GM18951 (cell line): ENCODE measurements at regions of chr1 and their contacts with region 1.

Region 1: DNA sequence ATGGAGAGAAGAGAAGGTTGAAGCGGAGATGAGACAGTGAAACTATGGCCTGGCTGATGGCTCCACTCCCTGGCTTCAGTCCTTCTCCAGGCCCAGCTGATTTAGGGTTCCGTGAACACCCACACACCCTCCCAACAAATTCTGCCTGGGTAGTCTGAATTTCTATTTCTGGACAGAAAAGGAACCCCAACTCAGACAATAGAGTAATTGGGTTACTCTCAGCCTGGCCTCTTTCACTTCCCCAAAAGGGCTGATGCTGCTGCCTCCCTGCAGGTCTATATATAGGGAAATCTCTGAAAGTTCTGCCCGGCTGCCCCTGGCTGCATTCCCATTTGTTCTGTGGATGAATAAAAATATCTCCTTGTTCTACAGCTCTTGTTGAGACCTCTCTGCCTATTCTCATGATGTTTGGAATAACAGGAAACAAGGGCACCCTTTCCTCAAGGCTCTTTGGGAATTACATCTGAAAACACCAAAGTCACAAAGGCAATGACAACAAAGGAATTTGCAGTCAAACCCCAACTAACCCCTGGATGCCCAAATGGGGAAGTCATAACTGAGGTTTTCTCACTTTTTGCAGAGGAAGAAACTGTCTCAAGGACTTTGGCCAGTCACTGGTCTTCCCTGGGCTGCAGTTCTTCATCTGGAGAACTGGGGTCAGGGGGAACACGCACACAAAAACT is 11.4 kb upstream of the ZSCAN20 start:
- POLR2A ChIP-seq: no peak

Region 2: GRCh38 chr1:33295450-33296081 is 165.5 kb before region 1 on chr1:
- in situ Hi-C with region 1: loop called (anchors 10 kb)
- POLR2A ChIP-seq: no peak

Region 3: GRCh38 chr1:33654267-33654834 is 193.3 kb after region 1 on chr1:
- in situ Hi-C with region 1: no loop called
- POLR2A ChIP-seq: no peak

Region 4: GRCh38 chr1:33709783-33710718 is 249.0 kb after region 1 on chr1:
- in situ Hi-C with region 1: no loop called
- POLR2A ChIP-seq: no peak